Posterior vena cava (tissue), 2 donors: ENCODE measurements at regions of chr10 and their contacts with region 1.

Region 1: DNA sequence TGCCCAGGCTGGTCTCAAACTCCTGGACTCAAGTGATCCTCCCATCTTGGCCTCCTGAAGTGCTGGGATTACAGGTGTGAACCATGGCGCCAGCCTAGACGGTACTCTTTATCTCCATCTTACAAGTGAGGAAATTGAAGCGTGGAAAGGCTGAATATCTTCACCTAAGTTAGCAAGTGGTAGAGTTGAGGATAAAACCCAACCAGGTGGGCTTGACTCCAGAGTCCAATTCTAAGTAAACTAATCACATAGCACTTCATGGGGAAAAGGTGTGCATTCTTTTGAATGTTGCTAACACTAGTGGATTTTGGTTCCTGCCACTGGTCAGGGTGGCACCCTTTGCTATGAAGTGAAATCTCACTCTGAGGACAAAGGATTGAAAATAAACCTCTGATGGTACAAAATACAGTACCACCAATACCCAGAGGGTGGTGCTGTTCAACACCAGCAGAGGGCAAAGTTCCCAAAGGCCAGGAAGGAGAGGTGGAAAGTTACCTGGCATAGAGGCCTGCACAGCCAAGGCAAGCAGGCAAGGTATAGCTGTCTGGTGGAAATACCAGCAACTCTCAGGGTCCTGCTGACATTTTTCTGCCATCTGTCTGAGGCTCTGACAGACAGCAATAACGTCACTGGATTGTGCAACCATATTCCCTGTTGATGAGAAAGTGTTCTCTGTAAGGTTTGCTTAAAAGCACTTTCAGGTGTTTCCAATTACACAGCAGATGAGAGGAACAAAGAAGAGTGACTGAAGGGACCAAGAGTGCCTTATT is 17.6 kb downstream of the ZDHHC16 start:
- DNase-seq: no peak

Region 2: DNA sequence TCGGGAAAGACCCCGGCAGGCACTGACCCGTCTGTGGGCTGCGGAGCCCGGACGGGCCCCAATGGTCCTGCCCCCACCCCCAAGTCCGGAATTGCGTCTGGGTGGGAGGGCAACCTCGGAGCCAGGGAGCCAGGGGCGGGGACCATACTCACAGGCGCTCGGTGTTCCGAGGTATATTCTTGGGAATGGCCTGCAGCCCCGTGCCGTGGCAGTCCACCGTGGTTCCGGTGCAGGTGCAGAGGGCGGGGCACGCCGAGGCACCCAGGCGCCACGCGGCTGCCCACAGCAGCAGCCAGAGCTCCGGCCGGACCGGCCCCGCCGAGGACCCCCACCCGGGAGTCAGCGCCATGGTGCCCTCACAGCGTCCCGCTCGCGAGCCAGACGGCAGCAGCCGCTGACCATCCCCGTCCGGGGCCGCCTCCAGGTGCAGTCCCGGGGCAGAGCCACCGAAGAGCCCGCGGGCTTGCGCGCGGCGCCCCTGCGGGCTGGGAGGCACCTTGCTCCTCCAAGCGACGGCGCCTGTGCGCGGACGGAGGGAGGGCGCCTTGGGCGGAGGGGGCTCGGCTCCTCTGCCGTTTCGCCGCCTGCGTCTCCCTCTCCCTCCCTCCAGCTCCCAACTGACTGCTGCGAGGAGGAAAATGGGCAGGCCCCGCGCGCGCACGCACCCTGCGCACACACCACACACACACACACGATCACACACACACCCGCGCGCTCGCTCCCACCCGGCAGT is 278.1 kb before region 1 on chr10 and contains the start of gene SLIT1:
- intact Hi-C with region 1: no loop called
- DNase-seq: peak; percentile 76
- total RNA-seq, gene SLIT1: 0.23 to 0.33 TPM

Region 3: DNA sequence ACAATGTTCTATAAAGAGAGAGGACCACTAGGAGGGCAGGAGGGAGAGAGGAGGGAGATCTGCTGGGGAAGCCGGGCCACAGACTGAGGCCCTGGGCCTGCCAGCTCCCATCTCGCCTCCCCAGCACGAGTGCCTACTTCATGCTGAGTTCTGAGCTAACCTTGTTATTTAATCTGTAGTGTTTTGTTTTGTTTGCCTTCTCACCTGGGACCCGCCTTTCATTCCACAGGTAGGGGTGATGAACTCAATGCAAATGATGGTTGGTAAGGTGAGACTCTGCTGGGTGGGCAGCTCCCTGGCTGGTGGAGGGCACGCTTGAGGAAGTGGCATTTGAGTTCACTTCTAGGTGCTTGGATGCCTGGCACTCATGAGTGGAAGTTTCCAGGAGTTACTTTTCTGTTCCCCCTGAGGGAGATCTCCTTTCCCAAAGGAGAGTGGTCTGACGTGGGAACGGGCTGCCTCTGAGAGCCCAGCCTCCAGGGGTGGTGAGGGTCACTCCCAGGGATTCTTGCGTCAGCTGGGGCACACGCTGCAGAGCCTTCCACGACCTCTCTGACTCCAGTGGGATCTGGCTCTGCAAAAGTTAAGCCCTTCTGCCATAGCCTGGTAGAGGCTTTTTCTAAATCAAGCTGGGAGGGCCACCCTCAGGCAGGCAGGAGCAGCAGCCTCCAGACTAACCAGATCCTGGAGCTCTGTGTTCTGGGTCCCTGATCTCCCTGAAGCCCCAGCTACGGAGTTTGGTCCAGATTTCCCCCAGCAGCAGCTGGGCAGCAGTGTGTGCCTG is 57.6 kb after region 1 on chr10:
- intact Hi-C with region 1: no loop called
- DNase-seq: no peak

Region 4: GRCh38 chr10:97543025-97543575 is 79.6 kb after region 1 on chr10:
- intact Hi-C with region 1: loop called in 1 of 2 experiments (anchors 10 kb)
- DNase-seq: peak; percentile 95

Region 5: DNA sequence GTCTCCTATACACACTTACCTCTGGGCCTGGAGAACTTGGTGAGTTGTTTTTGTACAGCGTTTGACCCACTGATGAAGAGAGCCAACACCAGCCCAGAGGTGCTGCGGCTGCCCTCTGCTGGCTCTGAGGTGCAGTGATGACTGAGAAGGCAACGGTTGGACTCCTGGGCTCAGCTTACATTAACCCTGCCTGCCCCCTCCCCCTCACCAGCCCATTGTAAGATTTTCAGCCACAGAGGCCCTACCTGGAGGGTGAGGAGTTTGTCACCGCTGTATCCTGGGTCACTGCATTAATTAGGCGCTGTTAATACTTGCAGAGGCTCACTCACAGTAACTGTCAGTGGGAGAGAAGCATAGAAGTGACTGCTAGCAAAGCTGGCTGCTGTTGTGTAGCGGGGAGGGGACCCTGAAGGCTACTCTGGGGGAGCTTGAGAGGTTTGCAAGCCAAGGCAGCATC is 90.1 kb after region 1 on chr10:
- intact Hi-C with region 1: loop called (anchors 10 kb)
- DNase-seq: peak; percentile 88

Region 6: DNA sequence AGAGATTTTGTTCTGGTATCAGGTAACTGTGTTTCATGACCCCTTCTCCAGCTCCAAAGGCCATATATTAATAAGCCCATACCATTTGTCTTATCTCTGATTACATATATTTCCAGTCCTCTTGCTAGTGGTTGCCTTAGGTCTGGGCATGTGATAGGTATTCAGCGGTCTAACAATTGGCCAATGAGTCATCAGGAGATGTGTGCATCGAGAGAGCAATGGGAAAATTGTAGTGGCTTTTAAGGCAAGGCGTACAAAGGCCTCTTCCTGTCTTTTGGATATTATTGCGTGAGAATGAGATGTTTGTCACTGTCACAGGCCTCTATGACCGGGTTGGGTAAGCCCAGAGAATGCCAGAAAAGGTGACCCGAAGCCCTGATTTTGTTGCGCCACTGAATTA is 346.9 kb after region 1 on chr10:
- intact Hi-C with region 1: no loop called
- DNase-seq: no peak